SK-MEL-5 (cell line): ENCODE measurements at regions of chr2 and their contacts with region 1.

Region 1: GRCh38 chr2:197191177-197191939 is 119.2 kb downstream of the ANKRD44 start:
- DNase-seq: peak; percentile 64

Region 2: DNA sequence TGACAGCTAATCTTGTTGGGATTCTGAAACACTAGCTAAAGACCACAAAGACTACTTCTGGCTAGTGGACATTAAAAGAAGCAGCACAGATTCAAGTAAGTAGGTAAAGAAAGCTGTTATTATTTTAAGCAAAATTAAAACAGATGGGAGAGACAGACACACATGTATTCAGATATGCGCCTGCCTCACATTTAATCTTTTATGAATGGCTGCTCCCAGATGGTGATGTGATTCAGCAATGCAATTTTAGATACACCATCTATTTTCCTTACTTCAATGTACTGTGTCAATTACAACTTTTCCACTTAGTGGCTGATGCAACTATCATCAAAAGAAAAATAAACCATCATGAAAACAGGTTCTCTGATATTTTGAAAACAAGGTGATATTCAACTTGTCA is 131.9 kb before region 1 on chr2:
- in situ Hi-C with region 1: no loop called
- DNase-seq: no peak

Region 3: GRCh38 chr2:197286805-197287598 is 95.6 kb after region 1 on chr2:
- in situ Hi-C with region 1: loop called (anchors 25 kb)
- DNase-seq: peak; percentile 90

Region 4: GRCh38 chr2:197356136-197356535 is 164.8 kb after region 1 on chr2:
- in situ Hi-C with region 1: loop called (anchors 25 kb)
- DNase-seq: peak; percentile 51